ENCODE measurements at regions of chr1 and their contacts with region 1.

Region 1: DNA sequence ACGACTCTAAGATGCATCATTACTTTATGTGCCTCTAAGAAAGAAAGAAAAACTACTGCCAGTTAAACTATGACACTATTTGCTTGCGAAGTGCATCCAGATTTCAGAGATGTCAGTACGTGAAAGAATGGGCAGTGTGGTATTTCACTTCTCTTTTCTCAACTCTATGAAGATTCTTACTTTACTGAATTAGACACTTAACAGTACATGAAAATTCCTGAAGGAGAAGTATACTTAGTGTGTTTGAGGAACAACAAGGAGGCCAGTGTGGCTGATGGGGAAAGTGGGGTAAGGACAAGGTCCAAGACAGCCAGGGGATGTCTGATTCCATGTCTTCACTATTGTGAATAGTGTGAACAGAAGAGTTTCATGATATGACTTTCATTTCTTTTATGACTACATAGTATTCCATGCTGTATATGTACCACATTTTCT is 53.9 kb upstream of the HSD17B7 start:
- DNase-seq: no peak
- H3K4me3 ChIP-seq: no peak overlapping the region
- H3K27ac ChIP-seq: peak overlapping the region in 3 of 4 donors; percentile 64 to 84 (median 81)
- H3K4me1 ChIP-seq: peaks cover 0 to 57% (median 45%) of the 10 kb centered on the region in 4 donors
- H3K27me3 ChIP-seq: no peaks in the 10 kb centered on the region
- CTCF ChIP-seq: no peak
- EP300 ChIP-seq: no peak
- POLR2A ChIP-seq: no peak

Region 2: DNA sequence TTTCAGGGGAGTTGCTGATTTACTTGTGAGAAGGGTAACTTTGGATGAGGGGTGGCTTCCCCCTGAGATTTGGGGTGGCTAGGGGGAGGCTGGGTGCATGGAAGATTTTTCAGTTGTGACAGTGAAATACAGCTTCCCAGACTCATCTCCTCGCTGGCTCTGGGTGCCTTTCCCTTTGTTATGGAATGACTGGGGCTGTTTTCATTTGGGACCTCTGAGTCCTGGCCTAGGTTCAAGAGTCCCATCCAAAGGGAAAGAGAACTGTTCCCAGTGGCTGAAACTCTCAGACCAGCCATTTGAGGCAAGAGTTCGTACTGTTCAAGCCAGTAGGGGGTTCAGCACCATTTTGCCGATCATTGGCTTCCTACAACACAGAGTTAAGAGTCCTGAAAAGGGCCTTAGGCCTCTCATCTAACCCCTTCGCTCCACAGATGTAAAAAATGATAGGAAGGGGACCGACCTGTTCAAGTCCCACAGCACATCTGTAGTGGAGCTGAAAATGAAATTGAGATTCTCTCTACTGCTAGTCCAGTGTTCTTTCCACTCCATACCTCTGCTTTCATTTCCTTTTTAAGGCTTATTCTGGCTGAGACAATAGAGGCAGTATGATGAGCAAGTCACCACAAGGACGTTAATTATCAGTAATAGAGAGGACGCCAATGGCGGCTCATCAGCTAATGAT is 103.4 kb before region 1 on chr1:
- intact Hi-C with region 1: loop called (anchors 5 kb)
- DNase-seq: peak; percentile 77
- H3K4me3 ChIP-seq: peak overlapping the region; percentile 37 to 56 (median 56)
- H3K27ac ChIP-seq: peak overlapping the region; percentile 90 to 94 (median 90)
- H3K4me1 ChIP-seq: peaks cover 0 to 72% (median 58%) of the 10 kb centered on the region in 4 donors
- H3K27me3 ChIP-seq: no peaks in the 10 kb centered on the region
- CTCF ChIP-seq: no peak
- EP300 ChIP-seq: no peak
- POLR2A ChIP-seq: peak; percentile 21 to 30

Region 3: DNA sequence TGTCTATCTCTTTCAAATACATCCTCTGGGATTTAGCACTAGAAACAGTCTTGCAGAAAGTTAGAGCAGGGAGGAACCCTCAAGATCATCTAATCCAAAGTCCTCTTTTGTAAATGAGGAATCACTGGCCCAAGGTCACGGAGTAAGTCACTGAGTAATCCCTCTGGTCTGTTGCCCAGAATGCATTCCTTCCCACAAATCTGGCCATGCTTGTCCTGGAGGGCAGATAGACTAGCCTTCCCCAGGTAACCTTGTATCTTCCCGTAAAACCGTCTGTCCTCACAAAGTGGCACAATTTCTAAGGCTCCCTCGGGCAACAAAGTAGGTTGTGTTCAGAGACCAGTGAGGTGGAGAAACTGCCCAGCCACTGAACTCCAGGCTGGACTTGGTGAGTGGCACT is 58.2 kb before region 1 on chr1:
- intact Hi-C with region 1: loop called (anchors 10 kb)
- DNase-seq: peak; percentile 80
- H3K4me3 ChIP-seq: no peak overlapping the region
- H3K27ac ChIP-seq: peak overlapping the region; percentile 77 to 85 (median 80)
- H3K4me1 ChIP-seq: peaks cover 0 to 83% (median 72%) of the 10 kb centered on the region in 4 donors
- H3K27me3 ChIP-seq: no peaks in the 10 kb centered on the region
- CTCF ChIP-seq: no peak
- EP300 ChIP-seq: no peak
- POLR2A ChIP-seq: no peak

Region 4: GRCh38 chr1:162782671-162783070 is 46.0 kb after region 1 on chr1:
- intact Hi-C with region 1: loop called (anchors 10 kb)
- DNase-seq: no peak
- H3K4me3 ChIP-seq: no peak overlapping the region
- H3K27ac ChIP-seq: no peak overlapping the region
- H3K4me1 ChIP-seq: no peaks in the 10 kb centered on the region
- H3K27me3 ChIP-seq: no peaks in the 10 kb centered on the region
- CTCF ChIP-seq: no peak
- EP300 ChIP-seq: no peak
- POLR2A ChIP-seq: no peak

Region 5: GRCh38 chr1:162899422-162900146 is 162.9 kb after region 1 on chr1:
- intact Hi-C with region 1: no loop called
- DNase-seq: no peak
- H3K4me3 ChIP-seq: no peak overlapping the region
- H3K27ac ChIP-seq: no peak overlapping the region
- H3K4me1 ChIP-seq: no peaks in the 10 kb centered on the region
- H3K27me3 ChIP-seq: no peaks in the 10 kb centered on the region
- CTCF ChIP-seq: no peak
- EP300 ChIP-seq: no peak
- POLR2A ChIP-seq: no peak

Region 6: DNA sequence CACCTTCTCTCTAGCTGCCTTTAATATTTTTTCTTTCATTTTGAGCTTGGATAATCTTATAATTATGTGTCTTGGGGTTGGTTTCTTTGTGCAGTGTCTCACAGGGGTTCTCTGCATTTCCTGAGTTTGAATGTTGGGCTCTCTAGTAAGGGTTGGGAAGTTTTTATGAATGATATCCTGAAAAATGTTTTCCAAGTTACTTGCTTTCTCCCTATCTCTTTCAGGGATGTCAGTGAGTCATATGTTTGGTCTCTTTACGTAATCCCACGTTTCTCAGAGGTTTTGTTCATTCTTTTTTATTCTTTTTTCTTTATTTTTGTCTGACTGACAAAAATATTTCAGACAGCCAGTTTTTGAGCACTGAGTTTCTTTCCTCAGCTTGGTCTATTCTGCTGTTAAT is 179.8 kb after region 1 on chr1:
- intact Hi-C with region 1: no loop called
- DNase-seq: no peak
- H3K4me3 ChIP-seq: no peak overlapping the region
- H3K27ac ChIP-seq: no peak overlapping the region
- H3K4me1 ChIP-seq: no peaks in the 10 kb centered on the region
- H3K27me3 ChIP-seq: no peaks in the 10 kb centered on the region
- CTCF ChIP-seq: no peak
- EP300 ChIP-seq: no peak
- POLR2A ChIP-seq: no peak

Measured in sigmoid colon (tissue), 7 donors.